Activated CD4-positive, alpha-beta memory T cell treated with anti-CD3 and anti-CD28 coated beads for 36 hours (primary cell): ENCODE measurements at regions of chr6 and their contacts with region 1.

Region 1: DNA sequence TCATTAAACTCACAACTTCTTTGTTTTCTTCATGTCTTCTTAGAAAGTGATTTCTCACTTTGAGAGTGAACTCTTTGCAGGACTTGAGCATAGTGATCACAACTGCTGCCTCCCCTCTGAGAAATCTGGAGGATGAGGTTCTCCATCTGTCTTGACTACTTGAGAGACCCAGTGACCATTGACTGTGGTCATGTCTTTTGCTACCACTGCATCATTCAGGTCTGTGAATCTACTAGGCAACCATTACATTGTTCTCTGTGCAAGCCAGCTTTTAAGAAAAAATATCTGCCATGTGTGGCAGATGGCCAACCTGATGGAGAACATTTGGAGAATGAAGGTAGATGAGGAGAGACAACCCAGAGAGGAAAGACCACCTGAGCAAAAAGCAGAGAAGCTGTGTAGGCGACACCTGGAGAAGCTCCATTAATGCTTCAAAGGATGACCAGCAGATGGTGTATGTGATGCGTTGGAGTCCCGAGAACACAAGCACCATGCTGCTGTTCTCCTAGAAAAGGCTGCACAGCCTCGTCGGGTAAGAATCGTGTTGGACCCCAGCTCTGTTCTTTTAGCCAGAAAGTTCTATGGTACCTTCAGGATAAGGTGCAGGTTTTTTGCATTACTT is 25.1 kb upstream of the TRIM26 start:
- DNase-seq: peak; percentile 40
- H3K4me3 Mint-ChIP-seq: no peak overlapping the region
- H3K27ac Mint-ChIP-seq: no peak overlapping the region
- H3K4me1 Mint-ChIP-seq: no peaks in the 10 kb centered on the region
- H3K27me3 Mint-ChIP-seq: peaks cover 21% of the 10 kb centered on the region

Region 2: DNA sequence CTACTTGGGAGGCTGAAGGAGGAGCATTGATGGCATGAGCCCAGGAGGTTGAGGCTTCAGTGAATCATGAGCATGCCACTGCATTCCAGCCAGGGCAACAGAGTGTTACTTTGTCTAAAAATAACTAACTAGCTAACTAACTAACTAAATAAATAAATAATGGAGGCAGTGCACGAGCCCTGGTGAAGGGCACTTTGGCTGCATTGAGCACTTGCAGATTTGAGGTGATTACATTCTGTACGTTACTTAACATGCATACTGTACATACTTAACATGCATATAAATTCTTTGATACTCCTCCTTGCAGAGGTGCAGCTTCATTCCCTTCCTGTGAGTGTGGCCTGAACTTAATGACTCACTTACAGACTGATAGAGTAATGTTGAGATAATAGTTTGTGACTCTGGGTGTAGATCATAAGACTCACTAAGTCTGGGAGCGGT is 285.3 kb before region 1 on chr6:
- CTCF ChIA-PET with region 1: no interaction called
- POLR2A ChIA-PET with region 1: no interaction called
- intact Hi-C with region 1: no loop called
- DNase-seq: no peak
- H3K4me3 Mint-ChIP-seq: no peak overlapping the region
- H3K27ac Mint-ChIP-seq: no peak overlapping the region
- H3K4me1 Mint-ChIP-seq: peaks cover 10% of the 10 kb centered on the region
- H3K27me3 Mint-ChIP-seq: no peaks in the 10 kb centered on the region

Region 3: GRCh38 chr6:30259140-30260035 is 21.1 kb after region 1 on chr6:
- CTCF ChIA-PET with region 1: interaction called, 6 read pairs
- POLR2A ChIA-PET with region 1: no interaction called
- intact Hi-C with region 1: loop called (anchors 2 kb)
- DNase-seq: peak; percentile 82
- H3K4me3 Mint-ChIP-seq: peak overlapping the region; percentile 83
- H3K27ac Mint-ChIP-seq: peak overlapping the region; percentile 44
- H3K4me1 Mint-ChIP-seq: peaks cover 21% of the 10 kb centered on the region
- H3K27me3 Mint-ChIP-seq: peaks cover 1% of the 10 kb centered on the region